K562 (cell line): ENCODE measurements at regions of chr20 and their contacts with region 1.

Region 1: GRCh38 chr20:62121776-62122631 is at the start of gene LSM14B:
- DNase-seq: peak; percentile 96 to 99 (median 97)
- ATAC-seq: peak; percentile 92
- H3K4me3 ChIP-seq: peak within 1 kb of the TSS; percentile 87
- H3K27ac ChIP-seq: peak within 1 kb of the TSS; percentile 98
- H3K4me1 ChIP-seq: peaks cover 13 to 45% of the 10 kb centered on the region in 2 experiments; a peak in 4 of 5 replicates
- H3K27me3 ChIP-seq: peaks cover 7 to 22% of the 10 kb centered on the region in 2 experiments; a peak in 4 of 5 replicates
- CTCF ChIP-seq: no peak
- EP300 ChIP-seq: peak; percentile 30; the same call in 1 of the 2 replicates
- POLR2A ChIP-seq: peak; percentile 53; the same call in 1 of the 2 replicates
- RAD21 ChIP-seq: no peak
- polyA plus RNA-seq, gene LSM14B: 0.66 to 0.83 TPM

Region 2: GRCh38 chr20:62065669-62066338 is 56.2 kb before region 1 on chr20 and contains the start of gene TAF4:
- CTCF ChIA-PET with region 1: no interaction called
- POLR2A ChIA-PET with region 1: interaction called, 4 read pairs
- in situ Hi-C with region 1: no loop called
- intact Hi-C with region 1: loop called (anchors 5 kb)
- DNase-seq: peak; percentile 78 to 99 (median 98)
- ATAC-seq: peak; percentile 71
- H3K4me3 ChIP-seq: peak within 1 kb of the TSS; percentile 64
- H3K27ac ChIP-seq: peak within 1 kb of the TSS; percentile 79
- H3K4me1 ChIP-seq: peaks cover 19 to 36% of the 10 kb centered on the region in 2 experiments
- H3K27me3 ChIP-seq: no peaks in the 10 kb centered on the region; a peak in 1 of 5 replicates
- CTCF ChIP-seq: no peak
- EP300 ChIP-seq: no peak
- POLR2A ChIP-seq: peak; percentile 54; the same call in 1 of the 2 replicates
- RAD21 ChIP-seq: no peak
- polyA plus RNA-seq, gene TAF4: 0.44 to 0.48 TPM

Region 3: GRCh38 chr20:62136283-62137091 is 14.5 kb after region 1 on chr20:
- CTCF ChIA-PET with region 1: no interaction called
- POLR2A ChIA-PET with region 1: interaction called, 78 read pairs
- in situ Hi-C with region 1: no loop called
- intact Hi-C with region 1: no loop called
- DNase-seq: peak in 2 of 4 experiments; percentile 50 to 74
- ATAC-seq: peak; percentile 78
- H3K4me3 ChIP-seq: no peak overlapping the region
- H3K27ac ChIP-seq: no peak overlapping the region
- H3K4me1 ChIP-seq: peaks cover 5 to 6% of the 10 kb centered on the region in 2 experiments; a peak in 4 of 5 replicates
- H3K27me3 ChIP-seq: no peaks in the 10 kb centered on the region
- CTCF ChIP-seq: peak; percentile 74 to 85 (median 85)
- EP300 ChIP-seq: no peak
- POLR2A ChIP-seq: peak; percentile 62; the same call in 1 of the 2 replicates
- RAD21 ChIP-seq: peak; percentile 61 to 74